K562 (cell line): ENCODE measurements at regions of chr5 and their contacts with region 1.

Region 1: GRCh38 chr5:39283231-39283818 is 64.0 kb upstream of the FYB1 start:
- DNase-seq: peak; percentile 33 to 84 (median 57)
- ATAC-seq: peak; percentile 100
- H3K4me3 ChIP-seq: no peak overlapping the region
- H3K27ac ChIP-seq: no peak overlapping the region
- H3K4me1 ChIP-seq: no peaks in the 10 kb centered on the region; a peak in 1 of 5 replicates
- H3K27me3 ChIP-seq: no peaks in the 10 kb centered on the region
- CTCF ChIP-seq: peak; percentile 78 to 94 (median 80)
- EP300 ChIP-seq: 0 out of 2 replicates have a peak, but pooled peaks have one; percentile 26
- POLR2A ChIP-seq: no peak
- RAD21 ChIP-seq: peak; percentile 98 to 99

Region 2: GRCh38 chr5:39005566-39006232 is 277.6 kb before region 1 on chr5:
- CTCF ChIA-PET with region 1: interaction called, 4 read pairs
- POLR2A ChIA-PET with region 1: no interaction called
- in situ Hi-C with region 1: no loop called
- intact Hi-C with region 1: loop called (anchors 5 kb)
- DNase-seq: peak in 2 of 4 experiments; percentile 44 to 66
- ATAC-seq: peak; percentile 92
- H3K4me3 ChIP-seq: no peak overlapping the region
- H3K27ac ChIP-seq: peak overlapping the region; percentile 27; the same call in 1 of the 3 replicates
- H3K4me1 ChIP-seq: peaks cover 0 to 7% of the 10 kb centered on the region in 2 experiments; a peak in 2 of 5 replicates
- H3K27me3 ChIP-seq: no peaks in the 10 kb centered on the region
- CTCF ChIP-seq: peak; percentile 51 to 71 (median 70)
- EP300 ChIP-seq: no peak
- POLR2A ChIP-seq: no peak
- RAD21 ChIP-seq: peak; percentile 67 to 85